ENCODE measurements at regions of chr6 and their contacts with region 1.

Region 1: GRCh38 chr6:26175428-26176181 is 88.4 kb downstream of the HFE start:
- DNase-seq: peak; percentile 58
- H3K4me3 Mint-ChIP-seq: peak overlapping the region; percentile 19
- H3K27ac Mint-ChIP-seq: peak overlapping the region; percentile 79
- H3K4me1 Mint-ChIP-seq: peaks cover 51% of the 10 kb centered on the region
- H3K27me3 Mint-ChIP-seq: no peaks in the 10 kb centered on the region

Region 2: DNA sequence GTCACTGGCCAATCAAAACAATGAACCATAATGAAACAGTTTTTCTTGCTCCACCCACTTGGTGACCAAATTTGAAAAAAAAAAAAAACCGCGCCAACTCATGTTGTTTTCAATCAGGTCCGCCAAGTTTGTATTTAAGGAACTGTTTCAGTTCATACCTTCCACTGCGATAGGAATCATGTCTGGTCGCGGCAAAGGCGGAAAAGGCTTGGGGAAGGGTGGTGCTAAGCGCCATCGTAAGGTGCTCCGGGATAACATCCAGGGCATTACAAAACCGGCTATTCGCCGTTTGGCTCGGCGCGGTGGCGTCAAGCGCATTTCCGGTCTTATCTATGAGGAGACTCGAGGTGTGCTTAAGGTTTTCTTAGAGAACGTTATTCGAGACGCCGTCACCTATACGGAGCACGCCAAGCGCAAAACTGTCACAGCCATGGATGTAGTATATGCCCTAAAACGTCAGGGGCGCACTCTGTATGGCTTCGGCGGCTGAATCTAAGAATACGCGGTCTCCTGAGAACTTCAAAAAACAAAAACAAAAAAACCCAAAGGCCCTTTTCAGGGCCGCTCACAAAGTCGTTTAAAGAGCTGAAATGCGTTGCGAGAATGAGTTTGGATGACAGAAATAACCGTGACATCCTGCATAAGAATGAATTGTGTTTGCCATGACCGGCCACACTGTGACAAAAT is 71.7 kb before region 1 on chr6:
- intact Hi-C with region 1: no loop called
- DNase-seq: peak; percentile 90
- H3K4me3 Mint-ChIP-seq: peak overlapping the region; percentile 90
- H3K27ac Mint-ChIP-seq: peak overlapping the region; percentile 99
- H3K4me1 Mint-ChIP-seq: peaks cover 25% of the 10 kb centered on the region
- H3K27me3 Mint-ChIP-seq: peaks cover 2% of the 10 kb centered on the region

Region 3: DNA sequence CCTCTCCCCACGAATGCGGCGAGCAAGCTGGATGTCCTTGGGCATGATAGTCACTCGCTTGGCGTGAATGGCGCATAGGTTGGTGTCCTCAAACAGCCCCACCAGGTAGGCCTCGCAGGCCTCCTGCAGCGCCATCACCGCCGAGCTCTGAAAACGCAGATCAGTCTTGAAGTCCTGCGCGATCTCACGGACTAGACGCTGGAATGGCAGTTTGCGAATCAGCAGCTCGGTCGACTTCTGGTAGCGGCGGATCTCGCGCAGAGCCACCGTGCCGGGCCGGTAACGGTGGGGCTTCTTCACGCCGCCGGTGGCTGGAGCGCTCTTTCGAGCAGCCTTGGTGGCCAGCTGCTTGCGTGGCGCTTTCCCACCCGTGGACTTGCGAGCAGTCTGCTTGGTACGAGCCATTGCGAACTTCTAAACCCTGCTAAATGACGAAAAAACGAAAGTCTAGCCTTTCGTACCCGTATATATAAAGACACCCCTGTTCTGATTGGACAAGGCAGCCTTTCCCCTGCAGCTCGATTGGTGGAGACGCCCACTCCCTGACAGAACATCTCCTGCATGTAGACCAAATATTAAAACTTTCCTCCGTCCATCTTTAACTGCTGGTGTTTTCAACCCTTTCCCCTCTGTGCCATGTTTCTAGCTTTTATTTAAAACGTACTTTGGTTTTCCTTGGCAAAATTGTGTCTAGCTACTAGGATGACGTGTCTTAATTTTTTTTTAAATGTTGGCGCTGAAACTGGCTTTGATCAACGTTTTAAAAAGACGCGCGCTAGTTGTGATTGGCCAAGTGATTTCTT is 21.4 kb after region 1 on chr6:
- intact Hi-C with region 1: loop called (anchors 1 kb)
- DNase-seq: peak; percentile 84
- H3K4me3 Mint-ChIP-seq: peak overlapping the region; percentile 92
- H3K27ac Mint-ChIP-seq: peak overlapping the region; percentile 95
- H3K4me1 Mint-ChIP-seq: peaks cover 54% of the 10 kb centered on the region
- H3K27me3 Mint-ChIP-seq: no peaks in the 10 kb centered on the region

Region 4: GRCh38 chr6:26223228-26223627 is 47.6 kb after region 1 on chr6:
- intact Hi-C with region 1: no loop called
- DNase-seq: no peak
- H3K4me3 Mint-ChIP-seq: no peak overlapping the region
- H3K27ac Mint-ChIP-seq: no peak overlapping the region
- H3K4me1 Mint-ChIP-seq: peaks cover 10% of the 10 kb centered on the region
- H3K27me3 Mint-ChIP-seq: no peaks in the 10 kb centered on the region

Region 5: DNA sequence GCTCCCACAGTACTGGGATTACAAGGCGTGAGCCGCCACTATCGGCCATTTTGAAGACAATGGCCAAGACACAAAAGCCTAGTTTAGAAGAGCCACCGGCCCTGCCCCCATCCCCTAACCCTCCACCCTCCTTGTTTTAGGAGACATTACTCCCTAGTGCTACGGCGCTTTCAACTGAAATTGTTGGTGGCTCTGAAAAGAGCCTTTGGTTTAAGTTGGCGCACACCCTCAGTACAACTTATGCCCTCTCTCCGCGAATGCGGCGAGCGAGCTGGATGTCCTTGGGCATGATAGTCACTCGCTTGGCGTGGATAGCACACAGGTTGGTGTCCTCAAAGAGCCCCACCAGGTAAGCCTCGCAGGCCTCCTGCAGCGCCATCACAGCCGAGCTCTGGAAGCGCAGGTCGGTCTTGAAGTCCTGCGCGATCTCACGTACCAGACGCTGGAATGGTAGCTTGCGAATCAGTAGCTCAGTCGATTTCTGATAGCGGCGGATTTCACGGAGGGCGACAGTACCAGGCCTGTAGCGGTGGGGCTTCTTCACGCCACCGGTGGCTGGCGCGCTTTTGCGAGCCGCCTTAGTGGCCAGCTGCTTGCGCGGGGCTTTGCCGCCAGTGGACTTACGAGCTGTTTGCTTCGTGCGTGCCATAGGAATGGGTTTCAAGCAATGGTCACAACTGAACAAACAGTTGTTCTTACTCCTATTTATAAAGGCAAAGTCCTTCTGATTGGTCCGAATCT is 74.5 kb after region 1 on chr6:
- intact Hi-C with region 1: loop called (anchors 1 kb)
- DNase-seq: peak; percentile 68
- H3K4me3 Mint-ChIP-seq: peak overlapping the region; percentile 90
- H3K27ac Mint-ChIP-seq: peak overlapping the region; percentile 99
- H3K4me1 Mint-ChIP-seq: peaks cover 55% of the 10 kb centered on the region
- H3K27me3 Mint-ChIP-seq: peaks cover 2% of the 10 kb centered on the region

Region 6: GRCh38 chr6:26322645-26323482 is 147.3 kb after region 1 on chr6:
- intact Hi-C with region 1: loop called (anchors 1 kb)
- DNase-seq: peak; percentile 63
- H3K4me3 Mint-ChIP-seq: peak overlapping the region; percentile 89
- H3K27ac Mint-ChIP-seq: peak overlapping the region; percentile 51
- H3K4me1 Mint-ChIP-seq: peaks cover 51% of the 10 kb centered on the region
- H3K27me3 Mint-ChIP-seq: peaks cover 14% of the 10 kb centered on the region

Region 7: GRCh38 chr6:26596579-26597388 is 421.2 kb after region 1 on chr6 and contains the start of gene ABT1:
- intact Hi-C with region 1: loop called (anchors 1 kb)
- DNase-seq: peak; percentile 97
- H3K4me3 Mint-ChIP-seq: no peak within 1 kb of the TSS
- H3K27ac Mint-ChIP-seq: no peak within 1 kb of the TSS
- H3K4me1 Mint-ChIP-seq: peaks cover 39% of the 10 kb centered on the region
- H3K27me3 Mint-ChIP-seq: peaks cover 27% of the 10 kb centered on the region
- total RNA-seq, gene ABT1: 32.6 and 32.9 TPM in 2 replicates